Activated CD8-positive, alpha-beta T cell treated with anti-CD3 and anti-CD28 coated beads, Interleukin-2, amount 10 ng/mL, durations not matched to agents 7 days and 5 days (primary cell): ENCODE measurements at regions of chr1 and their contacts with region 1.

Region 1: GRCh38 chr1:161382214-161383019 is 14.7 kb upstream of the CFAP126 start:
- DNase-seq: no peak
- ATAC-seq: peak; percentile 84
- H3K4me3 Mint-ChIP-seq: no peak overlapping the region
- H3K27ac Mint-ChIP-seq: no peak overlapping the region
- H3K4me1 Mint-ChIP-seq: peaks cover 16% of the 10 kb centered on the region
- H3K27me3 Mint-ChIP-seq: no peaks in the 10 kb centered on the region

Region 2: GRCh38 chr1:161185282-161185682 is 197.1 kb before region 1 on chr1:
- CTCF ChIA-PET with region 1: interaction called, 20 read pairs
- POLR2A ChIA-PET with region 1: no interaction called
- DNase-seq: peak; percentile 90
- ATAC-seq: peak; percentile 83
- H3K4me3 Mint-ChIP-seq: peak overlapping the region; percentile 62
- H3K27ac Mint-ChIP-seq: peak overlapping the region; percentile 91
- H3K4me1 Mint-ChIP-seq: peaks cover 79% of the 10 kb centered on the region
- H3K27me3 Mint-ChIP-seq: no peaks in the 10 kb centered on the region

Region 3: DNA sequence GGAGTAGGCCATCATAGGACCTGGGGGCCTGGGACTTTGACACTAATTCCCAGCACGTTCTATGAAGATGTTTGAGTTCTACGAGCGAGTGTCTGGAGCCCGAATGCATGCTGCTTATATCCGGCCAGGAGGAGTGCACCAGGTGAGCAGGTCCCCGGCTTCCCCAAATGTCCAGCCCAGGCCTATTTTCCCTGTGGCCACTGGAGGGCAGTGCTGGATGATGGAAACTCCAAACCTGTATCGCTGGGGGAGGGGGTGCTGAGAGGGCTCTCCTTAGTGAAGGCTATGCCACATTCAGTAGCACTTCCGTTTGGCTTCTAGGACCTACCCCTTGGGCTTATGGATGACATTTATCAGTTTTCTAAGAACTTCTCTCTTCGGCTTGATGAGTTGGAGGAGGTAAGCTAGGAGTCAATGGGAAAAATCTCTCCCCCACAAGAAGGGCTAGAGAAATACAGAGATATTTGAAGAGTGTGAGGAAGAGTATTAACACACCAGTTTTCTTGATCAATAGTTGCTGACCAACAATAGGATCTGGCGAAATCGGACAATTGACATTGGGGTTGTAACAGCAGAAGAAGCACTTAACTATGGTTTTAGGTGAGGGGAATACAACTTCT is 172.5 kb before region 1 on chr1:
- CTCF ChIA-PET with region 1: interaction called, 44 read pairs
- POLR2A ChIA-PET with region 1: no interaction called
- DNase-seq: peak; percentile 84
- ATAC-seq: peak; percentile 89
- H3K4me3 Mint-ChIP-seq: no peak overlapping the region
- H3K27ac Mint-ChIP-seq: peak overlapping the region; percentile 57
- H3K4me1 Mint-ChIP-seq: peaks cover 48% of the 10 kb centered on the region
- H3K27me3 Mint-ChIP-seq: no peaks in the 10 kb centered on the region

Region 4: DNA sequence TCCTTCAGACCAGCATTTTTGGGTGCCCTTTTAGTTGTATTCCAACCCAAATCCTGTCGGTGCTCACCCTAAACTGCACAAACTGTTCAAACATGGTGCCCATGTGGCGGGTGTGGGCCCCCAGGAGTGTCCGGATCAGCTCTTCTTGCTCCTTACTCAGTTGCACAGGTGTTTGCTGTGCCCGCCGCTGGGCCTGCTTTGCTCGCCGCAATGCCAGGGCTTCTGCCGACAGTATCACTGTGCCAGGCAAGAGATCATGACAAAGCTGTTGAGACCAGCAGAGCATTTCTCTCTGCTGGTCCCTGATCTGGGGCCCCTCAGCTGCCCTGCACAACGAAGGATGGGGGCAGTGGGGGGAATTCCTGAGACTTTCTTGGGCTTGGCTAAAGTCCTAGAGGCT is 149.3 kb before region 1 on chr1:
- CTCF ChIA-PET with region 1: interaction called, 223 read pairs
- POLR2A ChIA-PET with region 1: interaction called, 6 read pairs
- DNase-seq: no peak
- ATAC-seq: no peak
- H3K4me3 Mint-ChIP-seq: no peak overlapping the region
- H3K27ac Mint-ChIP-seq: no peak overlapping the region
- H3K4me1 Mint-ChIP-seq: peaks cover 12% of the 10 kb centered on the region
- H3K27me3 Mint-ChIP-seq: peaks cover 2% of the 10 kb centered on the region

Region 5: DNA sequence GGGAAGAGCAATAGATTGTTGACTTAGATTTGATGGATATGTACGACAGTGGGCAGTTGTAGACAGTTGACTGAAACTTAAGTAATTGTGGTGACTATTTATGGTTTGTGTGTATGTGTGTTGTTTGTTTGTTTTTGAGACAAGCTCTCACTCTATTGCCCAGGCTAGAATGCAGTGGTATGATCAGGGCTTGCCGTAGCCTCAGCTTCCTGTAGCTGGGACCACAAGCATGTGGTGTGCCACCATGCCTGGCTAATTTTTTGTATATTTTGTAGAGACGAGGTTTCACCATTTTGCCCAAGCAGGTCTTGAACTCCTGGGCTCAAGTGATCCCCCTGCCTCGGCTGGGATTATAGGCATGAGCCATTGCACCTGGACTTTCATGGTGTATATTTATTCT is 58.4 kb before region 1 on chr1:
- CTCF ChIA-PET with region 1: interaction called, 12 read pairs
- POLR2A ChIA-PET with region 1: no interaction called
- DNase-seq: peak; percentile 67
- ATAC-seq: peak; percentile 84
- H3K4me3 Mint-ChIP-seq: no peak overlapping the region
- H3K27ac Mint-ChIP-seq: peak overlapping the region; percentile 39
- H3K4me1 Mint-ChIP-seq: peaks cover 10% of the 10 kb centered on the region
- H3K27me3 Mint-ChIP-seq: no peaks in the 10 kb centered on the region

Region 6: GRCh38 chr1:161691846-161692245 is 309.4 kb after region 1 on chr1:
- CTCF ChIA-PET with region 1: no interaction called
- POLR2A ChIA-PET with region 1: no interaction called
- DNase-seq: no peak
- ATAC-seq: no peak
- H3K4me3 Mint-ChIP-seq: no peak overlapping the region
- H3K27ac Mint-ChIP-seq: no peak overlapping the region
- H3K4me1 Mint-ChIP-seq: no peaks in the 10 kb centered on the region
- H3K27me3 Mint-ChIP-seq: peaks cover 39% of the 10 kb centered on the region